Ascending aorta (tissue), 2 donors: ENCODE measurements at regions of chrX and their contacts with region 1.

Region 1: DNA sequence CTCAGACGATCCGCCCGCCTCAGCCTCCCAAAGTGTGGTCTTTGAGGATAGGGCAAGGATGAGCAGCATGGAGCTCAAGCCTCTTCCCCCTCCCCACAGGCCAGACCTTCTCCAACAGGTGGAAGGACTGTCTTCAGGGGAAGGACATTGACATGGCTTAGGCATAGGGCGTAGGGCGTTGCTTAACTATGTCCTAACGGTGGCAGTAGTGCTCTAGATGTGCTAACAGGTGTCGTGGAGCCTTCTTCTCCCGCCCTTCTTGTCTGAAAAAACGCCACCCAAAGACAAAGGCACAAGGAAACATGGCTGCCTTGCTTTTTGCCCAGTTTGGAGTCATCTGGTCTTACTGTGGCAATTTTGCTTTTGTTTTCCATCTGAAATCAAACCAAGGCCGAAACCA is 219.8 kb downstream of the OR13H1 start:
- DNase-seq: peak; percentile 35 to 93
- H3K4me3 ChIP-seq: peak overlapping the region; percentile 24 to 60
- H3K27ac ChIP-seq: no peak overlapping the region
- H3K4me1 ChIP-seq: no peaks in the 10 kb centered on the region
- H3K27me3 ChIP-seq: no peaks in the 10 kb centered on the region
- CTCF ChIP-seq: peak; percentile 44 to 67 (median 60)

Region 2: DNA sequence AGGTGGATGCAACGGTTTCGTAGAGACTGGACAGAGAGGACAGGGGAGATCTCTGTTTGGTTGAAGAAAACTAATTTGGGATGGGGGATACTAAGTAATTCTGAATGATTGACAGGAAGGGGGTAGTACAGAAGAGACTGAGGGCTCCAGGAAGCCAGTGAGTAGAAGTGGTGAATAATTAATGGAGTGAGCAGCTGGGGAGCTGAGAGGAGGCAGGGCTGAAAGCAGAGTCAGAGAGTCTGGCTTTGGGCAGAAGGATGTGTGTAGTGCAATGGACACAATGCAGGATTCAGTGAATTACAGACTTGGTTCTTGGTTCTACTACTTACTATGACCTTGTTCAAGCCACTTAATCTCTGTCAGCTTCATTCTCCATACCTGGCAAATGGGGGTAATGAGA is 1200.2 kb before region 1 on chrX:
- intact Hi-C with region 1: no loop called
- DNase-seq: no peak
- H3K4me3 ChIP-seq: no peak overlapping the region
- H3K27ac ChIP-seq: no peak overlapping the region
- H3K4me1 ChIP-seq: no peaks in the 10 kb centered on the region
- H3K27me3 ChIP-seq: no peaks in the 10 kb centered on the region
- CTCF ChIP-seq: no peak

Region 3: DNA sequence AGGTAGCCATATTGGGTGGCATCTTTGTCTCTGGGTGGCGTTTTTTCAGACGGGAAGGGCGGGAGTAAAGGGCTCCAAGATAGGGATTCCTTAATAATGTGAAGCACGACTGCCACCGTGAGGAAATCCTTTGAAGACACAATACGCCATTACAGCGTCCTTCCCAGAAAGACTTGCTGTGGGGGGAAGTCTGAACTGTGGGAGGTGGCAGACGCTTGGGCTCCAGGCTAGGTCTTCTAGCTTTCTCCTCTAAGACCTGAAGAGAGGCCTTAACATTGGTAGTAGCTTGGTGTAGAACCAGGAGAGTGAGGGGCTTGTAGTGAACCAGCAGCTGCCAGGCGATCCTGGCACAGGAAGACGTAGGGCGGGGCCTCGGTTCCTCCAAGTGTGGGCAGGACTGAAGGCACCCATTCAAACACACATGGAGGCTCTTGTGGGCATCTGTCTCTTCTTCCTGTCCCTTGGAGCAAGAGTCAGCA is 22.5 kb before region 1 on chrX:
- intact Hi-C with region 1: loop called (anchors 2 kb)
- DNase-seq: peak; percentile 52 to 91
- H3K4me3 ChIP-seq: peak overlapping the region; percentile 48 to 65
- H3K27ac ChIP-seq: peak overlapping the region; percentile 69 to 82
- H3K4me1 ChIP-seq: no peaks in the 10 kb centered on the region
- H3K27me3 ChIP-seq: no peaks in the 10 kb centered on the region
- CTCF ChIP-seq: peak; percentile 31 to 46 (median 38)

Region 4: DNA sequence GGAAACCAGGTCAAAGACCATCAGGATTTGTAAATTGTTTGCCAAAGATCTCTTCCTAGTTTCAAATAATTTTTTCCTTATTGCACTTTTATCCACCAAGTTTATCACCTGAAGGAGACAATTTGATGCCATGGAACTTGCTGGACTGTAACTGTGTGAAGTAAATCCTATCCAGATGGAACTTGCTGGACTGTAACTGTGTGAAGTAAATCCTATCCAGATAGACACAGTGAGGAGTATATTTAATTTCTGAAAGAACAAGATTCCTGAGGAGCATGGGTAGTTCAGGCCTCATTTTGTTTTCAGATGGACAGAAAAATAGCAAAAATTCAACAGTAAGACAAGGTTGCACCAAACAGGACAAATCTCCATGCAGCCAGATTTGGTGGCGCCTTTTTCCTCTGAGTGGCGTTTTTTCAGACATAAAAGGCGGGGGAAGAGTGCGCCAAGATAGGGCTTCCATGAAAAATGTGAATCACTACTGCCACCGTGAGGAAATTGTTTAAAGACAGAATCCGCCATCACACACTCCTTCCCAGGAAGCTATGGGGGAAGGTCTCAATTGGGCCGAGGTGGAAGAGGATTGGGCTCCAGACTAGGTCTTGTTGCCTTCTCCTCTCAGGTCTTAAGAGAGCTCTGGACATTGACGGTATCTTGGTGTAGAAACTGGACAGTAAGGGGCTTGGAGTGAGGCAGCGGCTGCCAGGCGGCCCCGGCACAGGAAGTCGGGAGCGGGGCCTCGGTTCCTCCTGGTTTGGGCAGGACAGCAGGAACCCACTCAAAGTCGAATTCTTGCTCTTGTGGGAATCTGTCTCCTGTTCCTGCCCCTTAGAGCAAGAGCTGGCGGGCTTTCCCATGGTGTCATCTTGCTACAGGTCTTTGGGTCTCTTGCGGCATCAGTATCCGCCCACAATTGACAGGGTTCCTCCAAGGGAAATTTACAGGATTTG is 14.9 kb after region 1 on chrX:
- intact Hi-C with region 1: loop called (anchors 1 kb)
- DNase-seq: peak in 1 of 2 donors; percentile 87
- H3K4me3 ChIP-seq: peak overlapping the region; percentile 59 to 63
- H3K27ac ChIP-seq: peak overlapping the region; percentile 66 to 78
- H3K4me1 ChIP-seq: peaks cover 0 to 4% of the 10 kb centered on the region in 2 donors
- H3K27me3 ChIP-seq: no peaks in the 10 kb centered on the region
- CTCF ChIP-seq: peak; percentile 31 to 59 (median 57)

Region 5: GRCh38 chrX:131812836-131813825 is 49.5 kb after region 1 on chrX:
- intact Hi-C with region 1: loop called (anchors 5 kb)
- DNase-seq: peak; percentile 39 to 88
- H3K4me3 ChIP-seq: peak overlapping the region; percentile 42 to 68
- H3K27ac ChIP-seq: peak overlapping the region; percentile 72 to 73
- H3K4me1 ChIP-seq: no peaks in the 10 kb centered on the region
- H3K27me3 ChIP-seq: no peaks in the 10 kb centered on the region
- CTCF ChIP-seq: peak; percentile 16 to 73 (median 56)